ENCODE measurements at regions of chr14 and their contacts with region 1.

Region 1: DNA sequence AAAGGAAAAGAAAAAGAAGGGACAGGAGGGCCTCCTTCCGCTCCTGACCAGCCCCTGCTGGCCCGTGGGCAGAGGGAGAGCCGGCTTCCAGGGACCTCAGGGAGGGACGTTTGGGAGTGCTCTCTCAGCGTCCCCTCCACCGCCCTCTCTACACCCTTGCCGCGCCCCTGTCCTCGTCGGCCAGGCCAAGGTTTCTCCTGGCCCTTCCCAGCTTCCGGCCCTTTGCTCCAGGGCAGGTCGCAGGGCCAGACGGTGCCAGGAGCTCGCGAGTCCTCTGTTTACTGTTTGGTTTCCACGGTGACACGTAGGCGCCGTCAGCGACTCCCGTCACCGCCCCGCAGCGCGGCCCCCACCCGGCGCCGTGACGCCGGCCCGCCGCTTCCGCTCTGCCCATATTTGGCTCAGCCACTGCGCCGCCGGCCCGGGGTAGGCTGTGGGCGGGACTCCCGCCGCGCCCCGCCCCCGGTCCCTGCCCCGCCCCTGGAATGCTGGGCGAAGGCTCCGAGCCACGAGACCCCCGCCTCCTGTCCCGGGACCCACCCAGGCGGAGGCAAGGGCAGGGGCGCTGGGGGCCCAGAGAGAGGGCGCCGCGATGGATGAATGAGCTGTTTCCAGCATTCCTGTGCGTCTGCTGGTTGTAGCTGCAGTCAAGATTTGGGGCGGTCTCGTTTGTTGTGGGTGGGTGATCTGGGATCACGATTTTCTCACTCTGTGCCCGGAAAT is 15.5 kb downstream of the FOS start:
- DNase-seq: peak; percentile 92 to 96 (median 94)
- ATAC-seq: peak; percentile 95
- H3K4me3 ChIP-seq: peak overlapping the region; percentile 61
- H3K27ac ChIP-seq: peak overlapping the region; percentile 93
- H3K4me1 ChIP-seq: peaks cover 18 to 31% of the 10 kb centered on the region in 2 experiments
- H3K27me3 ChIP-seq: no peaks in the 10 kb centered on the region
- CTCF ChIP-seq: no peak
- EP300 ChIP-seq: no peak
- POLR2A ChIP-seq: peak; percentile 62
- RAD21 ChIP-seq: peak in 1 of 2 experiments; percentile 10; a peak in 1 of 4 replicates

Region 2: DNA sequence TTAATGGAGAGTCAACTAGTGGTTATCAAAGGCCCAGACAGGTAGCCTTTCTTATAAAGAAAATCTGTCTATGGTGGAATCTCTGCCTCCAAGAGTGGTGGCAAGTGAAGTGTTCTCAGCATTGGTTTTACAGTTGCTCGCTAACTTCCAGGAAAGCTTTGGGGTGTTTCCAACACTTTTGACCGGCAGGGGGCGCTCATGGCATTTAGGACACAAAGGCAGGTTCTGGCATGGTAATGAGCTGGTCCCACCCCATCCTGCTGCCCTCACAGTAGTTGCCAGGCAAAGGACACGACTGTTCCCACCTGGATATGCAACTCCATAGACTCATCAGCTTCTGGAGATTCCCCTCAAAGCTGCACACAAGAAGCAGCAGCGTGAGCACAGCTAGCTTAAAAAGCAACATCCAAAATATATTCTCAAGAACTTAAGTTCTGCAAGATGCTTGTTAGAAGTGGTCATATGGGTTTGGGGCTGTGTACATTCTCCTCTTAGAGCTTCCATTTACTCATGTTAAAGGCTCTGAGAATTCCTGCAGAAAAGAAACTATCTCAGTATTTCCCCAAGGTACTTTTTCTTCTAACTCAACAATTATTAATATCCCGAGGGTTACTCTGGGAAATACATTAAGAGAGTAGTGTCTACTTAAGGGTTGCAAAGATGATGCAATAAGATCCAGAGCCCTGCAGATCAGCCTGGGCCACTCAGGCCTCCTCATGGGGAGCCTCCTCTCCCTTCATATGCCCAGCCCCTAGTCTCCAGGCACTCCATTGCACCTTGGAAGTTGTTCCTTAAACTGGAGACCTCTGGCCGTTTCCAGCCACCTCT is 433.0 kb before region 1 on chr14:
- CTCF ChIA-PET with region 1: no interaction called
- POLR2A ChIA-PET with region 1: no interaction called
- in situ Hi-C with region 1: no loop called
- intact Hi-C with region 1: loop called (anchors 5 kb)
- DNase-seq: peak; percentile 71 to 85 (median 76)
- ATAC-seq: peak; percentile 95
- H3K4me3 ChIP-seq: no peak overlapping the region
- H3K27ac ChIP-seq: no peak overlapping the region
- H3K4me1 ChIP-seq: no peaks in the 10 kb centered on the region; a peak in 1 of 5 replicates
- H3K27me3 ChIP-seq: no peaks in the 10 kb centered on the region
- CTCF ChIP-seq: peak; percentile 77 to 85 (median 81)
- EP300 ChIP-seq: no peak
- POLR2A ChIP-seq: no peak
- RAD21 ChIP-seq: peak; percentile 72 to 79

Region 3: GRCh38 chr14:75132382-75133086 is 161.5 kb before region 1 on chr14:
- CTCF ChIA-PET with region 1: interaction called, 9 read pairs
- POLR2A ChIA-PET with region 1: interaction called, 4 read pairs
- in situ Hi-C with region 1: no loop called
- intact Hi-C with region 1: loop called (anchors 1 kb)
- DNase-seq: peak; percentile 22 to 76 (median 30)
- ATAC-seq: peak; percentile 91
- H3K4me3 ChIP-seq: no peak overlapping the region
- H3K27ac ChIP-seq: no peak overlapping the region
- H3K4me1 ChIP-seq: peaks cover 0 to 4% of the 10 kb centered on the region in 2 experiments; a peak in 2 of 5 replicates
- H3K27me3 ChIP-seq: no peaks in the 10 kb centered on the region
- CTCF ChIP-seq: peak; percentile 56 to 74 (median 60); a peak in 5 of 6 replicates
- EP300 ChIP-seq: no peak
- POLR2A ChIP-seq: no peak
- RAD21 ChIP-seq: peak; percentile 85 to 89

Region 4: DNA sequence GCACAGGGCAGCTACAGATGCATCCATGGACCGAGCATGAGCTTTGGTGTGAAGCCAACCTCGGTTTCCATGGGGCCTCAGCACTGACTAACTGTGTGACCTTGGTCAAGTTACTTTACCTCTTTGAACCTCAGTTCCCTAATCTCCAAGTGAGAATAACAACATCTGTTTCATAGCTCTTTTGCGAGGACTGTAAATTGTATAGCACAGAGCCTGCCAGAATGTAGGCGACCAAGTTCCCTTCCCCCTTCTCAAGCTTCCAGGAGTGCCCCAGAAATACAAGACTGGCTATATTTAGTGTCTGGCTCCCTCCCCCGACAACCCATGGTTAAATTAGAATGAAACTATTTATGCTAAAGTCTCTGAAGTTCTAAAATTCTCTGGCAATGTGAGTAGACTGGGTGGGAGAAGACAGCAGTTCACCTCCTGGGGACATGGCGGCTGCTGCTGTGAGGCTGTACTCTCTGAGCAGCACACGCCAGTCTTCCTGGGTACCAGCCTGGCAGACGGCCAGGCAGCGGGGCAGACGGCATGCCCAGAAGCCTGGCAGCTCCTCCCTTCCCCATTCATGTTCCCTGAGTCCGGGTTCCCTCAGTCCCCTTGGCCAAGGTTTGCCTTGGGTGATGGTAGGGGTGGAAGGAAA is 95.7 kb before region 1 on chr14:
- CTCF ChIA-PET with region 1: no interaction called
- POLR2A ChIA-PET with region 1: no interaction called
- in situ Hi-C with region 1: no loop called
- intact Hi-C with region 1: no loop called
- DNase-seq: no peak
- ATAC-seq: no peak; the same call in 1 of the 3 replicates
- H3K4me3 ChIP-seq: no peak overlapping the region
- H3K27ac ChIP-seq: no peak overlapping the region
- H3K4me1 ChIP-seq: peaks cover 14 to 16% of the 10 kb centered on the region in 2 experiments; a peak in 4 of 5 replicates
- H3K27me3 ChIP-seq: no peaks in the 10 kb centered on the region
- CTCF ChIP-seq: no peak
- EP300 ChIP-seq: no peak
- POLR2A ChIP-seq: no peak
- RAD21 ChIP-seq: no peak

Region 5: GRCh38 chr14:75230140-75231045 is 63.7 kb before region 1 on chr14:
- CTCF ChIA-PET with region 1: no interaction called
- POLR2A ChIA-PET with region 1: no interaction called
- in situ Hi-C with region 1: no loop called
- intact Hi-C with region 1: loop called (anchors 5 kb)
- DNase-seq: peak in 3 of 4 experiments; percentile 17 to 36 (median 32)
- ATAC-seq: peak; percentile 47; the same call in 2 of the 3 replicates
- H3K4me3 ChIP-seq: no peak overlapping the region
- H3K27ac ChIP-seq: 0 out of 3 replicates have a peak overlapping the region, but pooled peaks have one; percentile 16
- H3K4me1 ChIP-seq: peaks cover 16 to 25% of the 10 kb centered on the region in 2 experiments; a peak in 4 of 5 replicates
- H3K27me3 ChIP-seq: no peaks in the 10 kb centered on the region
- CTCF ChIP-seq: peak in 1 of 3 experiments; percentile 22; a peak in 1 of 6 replicates
- EP300 ChIP-seq: no peak
- POLR2A ChIP-seq: no peak
- RAD21 ChIP-seq: no peak

Region 6: GRCh38 chr14:75258615-75259466 is 35.2 kb before region 1 on chr14:
- CTCF ChIA-PET with region 1: no interaction called
- POLR2A ChIA-PET with region 1: interaction called, 6 read pairs
- in situ Hi-C with region 1: no loop called
- intact Hi-C with region 1: loop called (anchors 2 kb)
- DNase-seq: peak; percentile 93 to 98 (median 94)
- ATAC-seq: peak; percentile 97
- H3K4me3 ChIP-seq: peak overlapping the region; percentile 37
- H3K27ac ChIP-seq: peak overlapping the region; percentile 94
- H3K4me1 ChIP-seq: peaks cover 6 to 22% of the 10 kb centered on the region in 2 experiments
- H3K27me3 ChIP-seq: no peaks in the 10 kb centered on the region
- CTCF ChIP-seq: no peak
- EP300 ChIP-seq: 0 out of 2 replicates have a peak, but pooled peaks have one; percentile 27
- POLR2A ChIP-seq: peak; percentile 45; the same call in 1 of the 2 replicates
- RAD21 ChIP-seq: no peak; a peak in 1 of 4 replicates

Region 7: DNA sequence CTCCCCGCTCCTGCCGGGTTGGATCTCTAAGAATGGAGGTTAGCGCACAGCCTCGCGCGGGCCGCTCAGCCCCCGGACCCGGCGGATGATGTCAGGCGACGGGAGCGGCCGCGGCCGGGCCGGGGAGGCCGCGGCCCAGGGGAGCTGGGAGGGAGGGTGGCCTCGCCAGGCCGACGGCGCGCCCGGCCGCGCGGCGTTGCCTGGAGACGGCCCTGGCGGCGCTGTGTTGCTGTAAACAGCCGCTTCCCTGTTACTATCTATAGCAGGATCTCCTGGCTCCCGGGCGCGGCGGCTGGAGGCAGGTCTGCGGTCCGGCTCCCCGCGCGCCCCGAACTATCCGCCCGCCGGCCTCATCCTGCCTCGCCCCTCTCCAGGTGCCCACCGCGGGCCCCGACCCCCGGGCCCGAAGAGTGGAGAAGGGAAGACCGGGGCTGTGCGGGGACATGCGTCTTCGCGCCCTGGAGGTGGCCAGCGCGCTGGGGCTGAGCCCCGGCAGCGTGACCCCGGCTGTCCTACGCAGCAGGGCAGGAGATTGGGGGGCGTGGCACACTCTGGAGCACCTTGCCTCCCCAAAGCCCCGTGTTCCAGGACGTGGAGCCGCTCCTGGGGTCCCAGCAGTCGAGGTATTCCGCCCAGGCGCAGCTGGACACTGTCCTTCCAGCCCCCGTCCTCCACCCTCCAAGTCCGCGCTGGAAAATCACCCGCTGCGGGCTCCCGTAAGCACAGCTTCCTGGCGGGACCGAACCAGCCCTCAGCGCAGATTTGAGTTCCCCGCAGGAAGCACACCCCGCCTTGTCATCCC is 16.9 kb before region 1 on chr14:
- CTCF ChIA-PET with region 1: no interaction called
- POLR2A ChIA-PET with region 1: interaction called, 24 read pairs
- in situ Hi-C with region 1: no loop called
- intact Hi-C with region 1: loop called (anchors 1 kb)
- DNase-seq: peak; percentile 83 to 86 (median 85)
- ATAC-seq: peak; percentile 84
- H3K4me3 ChIP-seq: peak overlapping the region; percentile 71
- H3K27ac ChIP-seq: peak overlapping the region; percentile 98
- H3K4me1 ChIP-seq: peaks cover 11 to 37% of the 10 kb centered on the region in 2 experiments; a peak in 4 of 5 replicates
- H3K27me3 ChIP-seq: no peaks in the 10 kb centered on the region
- CTCF ChIP-seq: no peak
- EP300 ChIP-seq: no peak; the same call in 1 of the 2 replicates
- POLR2A ChIP-seq: no peak
- RAD21 ChIP-seq: no peak

Region 8: GRCh38 chr14:75283162-75283881 is 10.8 kb before region 1 on chr14:
- CTCF ChIA-PET with region 1: no interaction called
- POLR2A ChIA-PET with region 1: interaction called, 24 read pairs
- in situ Hi-C with region 1: no loop called
- intact Hi-C with region 1: no loop called
- DNase-seq: peak in 3 of 4 experiments; percentile 15 to 36 (median 17)
- ATAC-seq: peak; percentile 34
- H3K4me3 ChIP-seq: no peak overlapping the region
- H3K27ac ChIP-seq: peak overlapping the region; percentile 76
- H3K4me1 ChIP-seq: peaks cover 27 to 32% of the 10 kb centered on the region in 2 experiments
- H3K27me3 ChIP-seq: no peaks in the 10 kb centered on the region
- CTCF ChIP-seq: peak in 2 of 3 experiments; percentile 40 to 46; a peak in 3 of 6 replicates
- EP300 ChIP-seq: no peak
- POLR2A ChIP-seq: no peak
- RAD21 ChIP-seq: no peak

Region 9: GRCh38 chr14:75342762-75343599 is 48.9 kb after region 1 on chr14:
- CTCF ChIA-PET with region 1: no interaction called
- POLR2A ChIA-PET with region 1: no interaction called
- in situ Hi-C with region 1: no loop called
- intact Hi-C with region 1: no loop called
- DNase-seq: no peak
- ATAC-seq: no peak
- H3K4me3 ChIP-seq: no peak overlapping the region
- H3K27ac ChIP-seq: no peak overlapping the region
- H3K4me1 ChIP-seq: peaks cover 0 to 3% of the 10 kb centered on the region in 2 experiments; a peak in 3 of 5 replicates
- H3K27me3 ChIP-seq: no peaks in the 10 kb centered on the region; a peak in 1 of 5 replicates
- CTCF ChIP-seq: no peak
- EP300 ChIP-seq: no peak
- POLR2A ChIP-seq: no peak
- RAD21 ChIP-seq: no peak

Region 10: DNA sequence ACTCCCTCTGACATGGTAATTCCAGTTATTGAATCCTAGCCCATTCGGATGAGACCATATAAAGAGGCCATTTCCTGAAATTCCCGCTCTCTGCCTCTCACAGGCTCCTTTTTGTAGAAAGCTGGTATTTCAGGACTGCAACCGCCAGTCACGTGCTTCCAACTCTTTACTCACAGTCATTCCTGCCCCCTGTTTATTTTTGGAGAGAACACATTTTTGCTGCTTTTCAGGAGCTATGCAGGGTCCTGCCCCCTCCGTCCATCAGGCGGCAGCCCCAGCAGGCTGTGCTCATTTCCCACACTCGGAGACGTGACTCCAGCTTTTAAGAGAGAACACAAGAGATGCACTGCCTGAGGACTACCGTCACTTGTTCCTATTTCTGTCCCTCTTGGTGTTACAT is 718.3 kb after region 1 on chr14:
- CTCF ChIA-PET with region 1: no interaction called
- POLR2A ChIA-PET with region 1: no interaction called
- in situ Hi-C with region 1: no loop called
- intact Hi-C with region 1: no loop called
- DNase-seq: no peak
- ATAC-seq: no peak
- H3K4me3 ChIP-seq: no peak overlapping the region
- H3K27ac ChIP-seq: no peak overlapping the region
- H3K4me1 ChIP-seq: no peaks in the 10 kb centered on the region; a peak in 1 of 5 replicates
- H3K27me3 ChIP-seq: no peaks in the 10 kb centered on the region
- CTCF ChIP-seq: no peak
- EP300 ChIP-seq: no peak
- POLR2A ChIP-seq: no peak
- RAD21 ChIP-seq: no peak

Measured in K562 (cell line).